ENCODE measurements at regions of chr15 and their contacts with region 1.

Region 1: DNA sequence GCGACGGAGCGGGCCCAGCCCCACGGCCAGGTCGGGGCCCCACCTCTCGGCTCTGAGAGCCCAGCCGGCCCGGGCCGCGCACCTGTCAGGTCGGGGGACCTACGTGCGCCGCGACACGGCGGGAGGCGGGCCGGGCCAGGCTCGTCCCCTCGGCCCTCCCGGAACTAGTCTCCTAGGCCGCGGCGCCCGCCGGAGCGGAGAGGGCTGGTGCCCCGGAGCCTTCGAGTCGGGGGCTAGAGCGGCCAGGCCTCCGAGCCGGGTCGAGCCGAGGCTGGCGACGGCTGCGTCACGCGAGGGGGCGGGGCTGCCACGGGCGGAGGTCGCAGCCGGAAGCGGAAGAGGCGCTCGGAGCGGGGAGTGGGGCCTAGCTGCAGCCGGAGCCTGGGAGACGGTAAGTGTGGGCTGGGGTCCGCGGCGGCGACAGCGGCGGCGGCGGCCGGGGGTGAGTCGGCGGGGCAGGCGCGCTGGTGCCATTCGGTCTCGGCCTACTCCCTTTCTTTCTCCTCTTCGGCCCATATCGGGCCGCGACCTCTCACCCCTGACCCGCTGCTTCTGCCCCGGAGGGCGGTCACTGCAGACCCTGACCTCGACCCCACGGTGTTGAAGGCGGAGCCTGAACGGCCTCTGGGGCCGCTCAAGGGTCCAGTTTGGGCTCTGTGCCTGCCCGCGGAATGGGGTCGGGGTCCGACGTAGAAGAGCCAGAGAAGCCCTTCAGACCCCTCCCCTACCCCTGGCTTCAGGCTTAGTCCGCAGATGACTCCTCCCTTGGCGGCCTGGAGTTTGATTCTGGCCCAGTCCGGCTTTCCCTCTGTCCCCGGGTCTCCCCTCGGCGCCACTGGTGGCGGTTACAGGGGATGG is at the start of gene CLK3:
- DNase-seq: peak; percentile 89
- H3K4me3 ChIP-seq: peak within 1 kb of the TSS; percentile 91 to 93 (median 93)
- H3K27ac ChIP-seq: peak within 1 kb of the TSS; percentile 88
- H3K4me1 ChIP-seq: peaks cover 9% of the 10 kb centered on the region
- H3K27me3 ChIP-seq: no peaks in the 10 kb centered on the region
- CTCF ChIP-seq: no peak
- POLR2A ChIP-seq: peak; percentile 77
- total RNA-seq, gene CLK3: 69.2 and 75.5 TPM in 2 replicates

Region 2: GRCh38 chr15:74445816-74446763 is 169.6 kb before region 1 on chr15:
- CTCF ChIA-PET with region 1: no interaction called
- POLR2A ChIA-PET with region 1: no interaction called
- dilution Hi-C with region 1: no loop called
- intact Hi-C with region 1: no loop called
- DNase-seq: no peak
- H3K4me3 ChIP-seq: no peak overlapping the region
- H3K27ac ChIP-seq: no peak overlapping the region
- H3K4me1 ChIP-seq: peaks cover 11% of the 10 kb centered on the region
- H3K27me3 ChIP-seq: no peaks in the 10 kb centered on the region
- CTCF ChIP-seq: no peak
- POLR2A ChIP-seq: no peak

Region 3: GRCh38 chr15:74540761-74541493 is 74.8 kb before region 1 on chr15 and contains the start of gene ARID3B:
- CTCF ChIA-PET with region 1: interaction called, 5 read pairs
- POLR2A ChIA-PET with region 1: interaction called, 8 read pairs
- dilution Hi-C with region 1: no loop called
- intact Hi-C with region 1: loop called (anchors 1 kb)
- DNase-seq: peak; percentile 94
- H3K4me3 ChIP-seq: peak within 1 kb of the TSS; percentile 87 to 98 (median 94)
- H3K27ac ChIP-seq: peak within 1 kb of the TSS; percentile 67
- H3K4me1 ChIP-seq: peaks cover 17% of the 10 kb centered on the region
- H3K27me3 ChIP-seq: no peaks in the 10 kb centered on the region
- CTCF ChIP-seq: no peak
- POLR2A ChIP-seq: peak; percentile 89
- total RNA-seq, gene ARID3B: 9.5 and 10.0 TPM in 2 replicates

Region 4: DNA sequence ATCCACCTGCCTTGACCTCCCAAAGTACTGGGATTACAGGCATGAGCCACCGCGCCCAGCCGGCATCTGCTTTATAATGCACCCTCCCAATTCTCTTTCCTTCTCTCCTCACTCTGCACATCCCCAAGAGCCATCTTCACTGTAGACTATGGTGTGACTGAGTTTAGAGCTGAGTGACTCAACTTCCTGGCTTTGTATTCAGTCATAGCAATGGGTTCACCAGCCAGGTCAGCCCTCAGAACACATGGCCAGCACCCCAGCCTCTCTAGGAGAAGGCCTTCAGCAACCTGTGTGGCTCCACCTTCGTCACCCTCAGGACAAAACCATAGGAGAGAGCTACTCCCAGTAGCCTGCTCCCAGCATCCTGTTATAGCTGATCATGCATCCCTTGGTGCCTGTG is 41.8 kb before region 1 on chr15:
- CTCF ChIA-PET with region 1: interaction called, 3 read pairs
- POLR2A ChIA-PET with region 1: no interaction called
- dilution Hi-C with region 1: no loop called
- intact Hi-C with region 1: loop called (anchors 1 kb)
- DNase-seq: peak; percentile 72
- H3K4me3 ChIP-seq: no peak overlapping the region
- H3K27ac ChIP-seq: peak overlapping the region; percentile 86
- H3K4me1 ChIP-seq: peaks cover 21% of the 10 kb centered on the region
- H3K27me3 ChIP-seq: no peaks in the 10 kb centered on the region
- CTCF ChIP-seq: no peak
- POLR2A ChIP-seq: no peak

Region 5: GRCh38 chr15:74598126-74598842 is 17.5 kb before region 1 on chr15:
- CTCF ChIA-PET with region 1: interaction called, 7 read pairs
- POLR2A ChIA-PET with region 1: interaction called, 5 read pairs
- dilution Hi-C with region 1: no loop called
- intact Hi-C with region 1: loop called (anchors 2 kb)
- DNase-seq: peak; percentile 92
- H3K4me3 ChIP-seq: peak overlapping the region; percentile 52 to 69 (median 56)
- H3K27ac ChIP-seq: peak overlapping the region; percentile 38
- H3K4me1 ChIP-seq: peaks cover 12% of the 10 kb centered on the region
- H3K27me3 ChIP-seq: no peaks in the 10 kb centered on the region
- CTCF ChIP-seq: no peak
- POLR2A ChIP-seq: peak; percentile 83

Measured in endothelial cell of umbilical vein (primary cell).